ENCODE measurements at regions of chr2 and their contacts with region 1.

Region 1: DNA sequence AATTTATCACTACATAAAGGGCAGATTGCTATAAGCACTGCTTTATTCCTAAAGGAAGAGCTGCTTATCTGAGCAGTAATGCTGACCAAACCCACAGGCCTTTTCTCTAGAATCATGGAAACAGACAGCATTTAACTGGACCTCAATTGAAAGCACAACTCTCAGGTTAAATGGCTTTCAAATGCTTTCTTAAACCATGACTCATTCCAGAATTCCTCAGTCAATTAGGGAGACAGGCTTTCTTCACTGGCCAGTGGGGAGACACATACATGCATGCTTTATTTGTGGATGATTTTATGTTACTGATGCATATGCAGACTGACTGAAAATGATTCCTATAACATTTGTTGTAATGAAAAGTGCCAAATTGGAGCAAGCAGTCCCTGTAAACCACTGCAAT is 114.6 kb downstream of the ACVR1 start:
- DNase-seq: no peak
- H3K4me3 Mint-ChIP-seq: no peak overlapping the region
- H3K27ac Mint-ChIP-seq: no peak overlapping the region
- H3K4me1 Mint-ChIP-seq: peaks cover 6% of the 10 kb centered on the region
- H3K27me3 Mint-ChIP-seq: no peaks in the 10 kb centered on the region
- CTCF ChIP-seq: no peak

Region 2: GRCh38 chr2:157628477-157629415 is 132.8 kb before region 1 on chr2 and contains the start of gene ACVR1C:
- CTCF ChIA-PET with region 1: interaction called, 4 read pairs
- POLR2A ChIA-PET with region 1: no interaction called
- intact Hi-C with region 1: loop called (anchors 10 kb)
- DNase-seq: peak; percentile 67
- H3K4me3 Mint-ChIP-seq: peak within 1 kb of the TSS; percentile 72
- H3K27ac Mint-ChIP-seq: no peak within 1 kb of the TSS
- H3K4me1 Mint-ChIP-seq: no peaks in the 10 kb centered on the region
- H3K27me3 Mint-ChIP-seq: peaks cover 11% of the 10 kb centered on the region
- CTCF ChIP-seq: peak; percentile 61
- total RNA-seq, gene ACVR1C: 0.12 and 0.17 TPM in 2 replicates

Measured in MCF 10A (cell line).